ENCODE measurements at regions of chr3 and their contacts with region 1.

Region 1: DNA sequence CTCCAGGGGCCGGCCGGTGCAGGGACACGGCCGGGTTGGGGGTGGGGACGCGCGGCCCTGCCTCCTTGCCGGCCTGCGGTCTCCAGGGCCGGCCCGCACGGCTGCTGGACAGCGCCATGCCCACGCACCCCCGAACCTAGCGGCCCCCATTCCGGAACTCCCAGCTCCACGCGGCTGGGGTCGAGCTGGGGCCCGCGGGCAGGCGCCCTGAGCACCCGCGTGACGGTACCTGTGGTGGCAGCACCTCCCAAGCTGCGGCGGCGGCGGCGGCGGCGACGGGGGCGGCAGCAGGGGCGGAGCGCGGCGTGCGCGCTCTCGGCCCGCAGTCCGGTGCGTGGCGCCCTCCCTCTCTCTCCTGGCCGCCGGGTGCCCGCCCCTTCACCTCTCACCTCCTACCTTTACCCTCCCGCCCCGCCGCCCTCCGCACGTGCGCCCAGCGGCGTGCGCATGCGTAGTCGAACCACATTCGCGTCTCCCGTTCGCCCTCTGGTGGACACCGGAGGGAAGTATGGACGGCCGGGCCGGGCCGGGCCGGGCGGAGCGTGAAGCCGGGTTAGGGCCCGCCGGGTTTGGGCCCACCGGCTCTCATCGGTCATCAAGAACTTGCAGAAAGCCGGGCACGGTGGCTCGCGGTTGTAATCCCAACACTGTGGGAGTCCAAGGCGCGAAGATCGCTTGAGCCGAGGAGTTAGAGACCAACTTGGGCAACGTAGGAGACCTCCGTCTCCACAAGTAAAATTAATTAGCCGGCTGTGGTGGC is at the start of gene SCAP:
- DNase-seq: peak; percentile 93 to 96
- H3K4me3 ChIP-seq: peak within 1 kb of the TSS; percentile 81
- H3K27ac ChIP-seq: peak within 1 kb of the TSS; percentile 76 to 84
- H3K4me1 ChIP-seq: peaks cover 4 to 29% (median 22%) of the 10 kb centered on the region in 4 donors
- H3K27me3 ChIP-seq: no peaks in the 10 kb centered on the region
- CTCF ChIP-seq: peak; percentile 90 to 99

Region 2: DNA sequence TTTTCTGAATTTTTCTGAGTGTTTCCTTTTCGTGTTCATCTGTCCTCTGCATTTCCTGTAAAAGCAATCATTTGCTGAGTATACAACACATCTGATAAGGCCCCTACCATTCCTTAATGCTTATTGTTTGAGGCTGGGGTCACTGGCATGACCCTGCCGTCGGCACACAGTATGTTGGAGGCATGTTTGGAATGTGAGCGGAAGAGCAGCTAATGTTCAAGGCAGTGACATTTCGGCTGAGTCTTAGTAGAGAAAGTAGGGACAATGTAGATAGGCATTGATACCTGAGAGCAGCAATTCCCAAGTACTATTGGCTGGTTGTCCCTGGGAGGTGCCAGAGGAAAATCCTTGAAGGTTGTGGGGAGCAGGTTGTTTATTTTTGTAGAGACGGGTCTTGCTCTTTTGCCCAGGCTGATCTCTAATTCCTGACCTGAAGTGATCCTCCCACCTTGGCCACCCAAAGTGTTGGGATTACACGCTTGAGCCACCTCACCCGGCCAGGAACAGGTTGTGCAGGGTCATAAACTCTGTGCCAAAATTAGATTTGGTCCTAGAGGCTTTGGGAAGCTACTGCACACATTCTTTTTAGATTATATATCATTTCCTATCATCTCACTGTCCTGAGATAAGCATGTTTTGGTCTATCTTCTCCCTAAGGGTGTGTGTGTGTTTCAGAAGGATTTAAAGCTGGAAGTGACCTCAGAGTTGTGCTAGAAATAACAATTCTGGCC is 81.4 kb before region 1 on chr3:
- intact Hi-C with region 1: no loop called
- DNase-seq: no peak
- H3K4me3 ChIP-seq: no peak overlapping the region
- H3K27ac ChIP-seq: peak overlapping the region; percentile 2 to 47
- H3K4me1 ChIP-seq: peaks cover 0 to 46% (median 19%) of the 10 kb centered on the region in 4 donors
- H3K27me3 ChIP-seq: no peaks in the 10 kb centered on the region
- CTCF ChIP-seq: no peak

Region 3: DNA sequence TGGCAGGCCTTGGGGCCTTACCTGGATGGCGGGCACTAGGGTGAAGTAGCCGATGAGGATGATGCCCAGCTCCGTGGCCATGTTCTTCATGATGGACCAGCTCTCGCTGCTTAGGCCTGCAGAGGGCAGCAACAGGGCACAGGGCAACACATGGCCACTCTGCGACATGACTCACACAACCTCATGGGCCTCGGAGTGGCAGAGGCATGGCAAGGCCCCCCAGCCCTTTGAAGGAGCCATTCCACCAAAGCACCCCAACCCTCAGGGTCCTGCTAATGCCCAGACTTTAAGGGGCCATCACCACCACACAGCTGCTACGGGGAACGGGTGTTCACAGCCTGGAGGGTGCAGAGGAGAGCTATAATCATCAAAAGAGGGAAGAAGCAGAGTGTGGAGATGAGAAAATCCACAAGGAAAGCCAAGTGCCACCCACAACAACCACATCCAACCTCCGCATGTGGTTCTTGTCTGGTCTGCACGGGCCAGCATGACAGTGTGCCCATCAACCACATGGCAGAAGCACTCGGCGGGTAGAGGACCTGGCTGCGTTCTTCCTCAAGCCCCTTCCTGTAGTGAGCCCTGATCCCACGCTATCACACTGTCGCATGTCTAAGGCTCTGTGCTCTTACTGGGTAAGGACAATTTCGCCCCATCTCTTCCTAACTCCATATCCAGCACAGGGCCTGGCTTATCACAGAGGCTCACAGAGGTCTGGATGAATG is 53.2 kb before region 1 on chr3:
- intact Hi-C with region 1: loop called (anchors 2 kb)
- DNase-seq: no peak
- H3K4me3 ChIP-seq: no peak overlapping the region
- H3K27ac ChIP-seq: no peak overlapping the region
- H3K4me1 ChIP-seq: peaks cover 0 to 18% (median 11%) of the 10 kb centered on the region in 4 donors
- H3K27me3 ChIP-seq: no peaks in the 10 kb centered on the region
- CTCF ChIP-seq: no peak